ENCODE measurements at regions of chr12 and their contacts with region 1.

Region 1: DNA sequence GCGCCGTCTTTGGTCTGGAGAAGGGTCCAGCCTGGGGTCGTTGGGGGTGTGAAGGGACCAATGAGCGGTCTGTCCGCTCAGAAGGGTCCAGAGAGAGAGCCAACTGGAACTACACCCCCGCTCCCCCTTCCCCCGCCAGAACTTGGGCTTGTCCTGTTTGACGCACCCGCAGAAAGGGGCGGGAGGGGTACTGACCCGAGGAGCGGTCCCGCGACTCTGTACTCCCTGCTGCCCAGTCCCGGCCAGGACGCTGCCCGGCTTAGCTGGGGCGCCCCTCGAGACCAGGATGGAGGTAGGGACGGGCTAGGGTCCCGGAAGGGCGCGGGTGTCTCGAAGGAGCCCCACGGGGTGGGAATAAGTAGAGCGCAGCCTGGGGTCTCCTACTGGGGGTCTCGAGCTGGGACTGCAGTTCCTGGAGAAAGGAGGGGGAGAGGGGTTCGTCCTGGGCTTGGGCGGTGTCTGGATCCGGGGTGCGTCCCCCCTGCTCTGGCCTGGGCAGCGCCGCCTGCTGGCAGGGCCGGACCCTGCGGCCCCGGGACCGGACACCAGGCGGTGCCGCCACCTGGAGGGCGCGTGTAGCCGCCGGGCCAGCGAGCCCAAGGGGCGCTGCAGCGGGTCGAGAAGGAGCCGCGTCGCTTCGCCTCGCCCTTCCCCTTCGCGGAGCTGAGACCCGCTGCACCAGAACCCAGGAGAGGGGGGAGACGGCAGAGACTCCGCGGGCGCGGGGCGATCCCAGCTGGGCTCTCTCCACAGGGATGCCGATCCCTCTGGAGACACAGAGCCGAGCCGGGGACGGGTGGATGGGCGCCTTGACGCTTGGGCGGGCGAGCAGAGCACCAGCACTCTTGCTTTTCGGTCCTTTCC is 3.8 kb upstream of the CACNB3 start:
- DNase-seq: peak; percentile 96
- CTCF ChIP-seq: peak; percentile 100

Region 2: GRCh38 chr12:48795480-48796455 is 18.7 kb before region 1 on chr12:
- CTCF ChIA-PET with region 1: interaction called, 42 read pairs
- POLR2A ChIA-PET with region 1: no interaction called
- DNase-seq: peak; percentile 80
- CTCF ChIP-seq: peak; percentile 91

Region 3: DNA sequence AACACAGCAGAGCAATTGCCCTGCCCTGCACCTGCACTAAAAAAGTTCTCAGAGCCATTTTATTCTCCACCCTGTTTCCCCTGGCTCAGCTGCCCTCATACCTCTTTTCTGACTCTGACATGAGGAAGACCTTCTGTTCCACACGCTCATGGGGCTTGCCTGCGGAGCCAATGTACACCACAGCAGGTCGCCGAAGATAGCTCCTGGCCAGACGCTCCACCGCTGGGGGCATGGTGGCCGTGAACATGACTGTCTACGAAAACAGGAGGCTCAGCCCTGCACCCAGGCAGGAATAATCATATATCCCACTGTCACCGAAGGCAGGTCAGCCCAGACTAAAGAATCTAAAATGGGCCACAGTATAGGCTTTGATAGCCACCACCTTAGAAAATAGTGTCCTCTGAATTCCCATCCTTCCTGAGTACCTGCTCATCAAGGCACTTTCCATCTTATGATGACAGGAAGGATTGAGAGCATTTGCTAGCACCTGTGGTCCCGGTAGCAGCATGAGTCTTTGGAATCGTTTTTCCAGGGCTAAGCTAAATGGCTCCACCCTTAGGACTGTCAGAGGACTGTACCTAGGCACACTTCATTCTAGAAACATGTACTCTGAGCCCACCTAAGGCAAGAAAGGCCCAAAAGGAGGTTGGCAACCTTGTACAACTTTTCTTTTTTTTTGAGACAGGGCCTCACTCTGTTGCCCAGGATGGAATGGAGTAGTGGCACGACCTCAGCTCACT is 18.0 kb after region 1 on chr12:
- CTCF ChIA-PET with region 1: interaction called, 70 read pairs
- POLR2A ChIA-PET with region 1: no interaction called
- DNase-seq: no peak
- CTCF ChIP-seq: no peak

Region 4: DNA sequence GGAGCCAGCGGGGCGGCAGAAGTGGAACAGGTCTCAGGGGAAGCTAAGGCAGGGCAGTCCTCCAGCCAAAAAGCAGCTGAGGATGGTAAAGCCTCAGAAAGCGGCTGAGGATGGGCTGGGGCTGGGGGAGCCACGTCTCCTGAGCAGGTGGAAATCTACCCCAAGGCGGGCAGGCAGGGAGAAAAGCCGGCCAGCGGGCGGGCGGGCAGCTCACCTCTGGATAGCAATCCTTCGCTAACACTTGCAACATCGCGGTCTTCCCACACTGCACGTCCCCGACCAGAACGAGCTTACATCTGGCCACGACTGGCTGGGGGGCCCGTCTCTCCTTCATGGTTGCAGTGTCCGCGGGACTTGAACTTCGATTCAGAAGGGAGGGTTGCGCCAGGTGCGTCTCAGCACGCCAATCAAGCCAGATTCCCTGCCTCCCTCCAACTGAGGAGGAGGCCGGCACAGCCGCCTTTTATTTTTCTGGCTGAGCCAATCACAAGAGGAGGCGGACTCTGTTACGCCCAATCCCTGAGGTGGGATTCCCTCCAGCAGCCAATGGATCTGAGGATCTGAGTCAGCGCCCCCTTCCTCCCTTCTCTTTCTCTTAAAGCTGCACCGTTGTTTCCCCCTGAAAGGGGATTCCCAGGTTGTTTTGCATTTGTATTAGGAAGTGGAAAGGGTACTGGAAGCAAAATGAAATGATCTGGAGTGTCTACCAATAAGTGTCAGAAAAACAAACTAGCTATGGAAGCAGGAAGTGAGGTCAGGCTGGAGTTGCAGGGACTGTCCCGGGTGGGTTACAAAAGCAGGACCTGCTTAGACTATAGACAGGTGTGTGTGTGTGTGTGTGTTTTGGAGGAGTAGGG is 51.2 kb after region 1 on chr12 and contains the start of gene RND1:
- CTCF ChIA-PET with region 1: interaction called, 11 read pairs
- POLR2A ChIA-PET with region 1: no interaction called
- DNase-seq: peak; percentile 93
- CTCF ChIP-seq: no peak

Measured in GM10248 (cell line).